ENCODE measurements at regions of chr20 and their contacts with region 1.

Region 1: GRCh38 chr20:63775096-63775978 is 35.8 kb downstream of the SLC2A4RG start:
- DNase-seq: peak; percentile 95
- H3K4me3 ChIP-seq: peak overlapping the region; percentile 28 to 47; a peak in 3 of 4 replicates
- H3K27ac ChIP-seq: no peak overlapping the region
- H3K4me1 ChIP-seq: peaks cover 0 to 5% of the 10 kb centered on the region in 2 experiments; a peak in 1 of 4 replicates
- H3K27me3 ChIP-seq: no peaks in the 10 kb centered on the region
- CTCF ChIP-seq: peak; percentile 77
- EP300 ChIP-seq: no peak
- RAD21 ChIP-seq: peak; percentile 72

Region 2: DNA sequence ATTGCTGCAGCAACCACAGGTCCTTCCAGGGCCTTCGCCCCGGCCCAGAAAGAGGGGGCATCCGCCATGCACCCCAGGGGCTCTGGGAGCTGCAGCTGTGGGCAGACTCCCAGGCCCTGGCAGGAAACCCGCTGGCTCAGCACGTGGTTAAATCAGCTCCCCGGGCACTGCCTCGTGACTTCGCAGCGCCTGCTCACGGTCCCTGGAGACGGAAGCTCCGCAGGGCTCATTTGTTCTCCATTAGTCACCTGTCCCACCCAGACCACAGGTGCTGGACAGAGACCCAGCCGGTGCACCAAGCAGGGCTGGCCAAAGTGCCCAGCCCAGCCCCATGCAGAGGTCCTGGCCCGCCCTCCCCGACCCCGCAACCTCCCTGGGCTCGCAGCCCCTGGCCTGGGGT is 317.6 kb before region 1 on chr20:
- CTCF ChIA-PET with region 1: no interaction called
- POLR2A ChIA-PET with region 1: no interaction called
- DNase-seq: peak; percentile 69
- H3K4me3 ChIP-seq: no peak overlapping the region
- H3K27ac ChIP-seq: peak overlapping the region in 1 of 2 experiments; percentile 99; a peak in 2 of 4 replicates
- H3K4me1 ChIP-seq: peaks cover 9 to 96% of the 10 kb centered on the region in 2 experiments; a peak in 2 of 4 replicates
- H3K27me3 ChIP-seq: no peaks in the 10 kb centered on the region; the same call in 1 of the 2 replicates
- CTCF ChIP-seq: no peak
- EP300 ChIP-seq: no peak
- RAD21 ChIP-seq: no peak

Region 3: DNA sequence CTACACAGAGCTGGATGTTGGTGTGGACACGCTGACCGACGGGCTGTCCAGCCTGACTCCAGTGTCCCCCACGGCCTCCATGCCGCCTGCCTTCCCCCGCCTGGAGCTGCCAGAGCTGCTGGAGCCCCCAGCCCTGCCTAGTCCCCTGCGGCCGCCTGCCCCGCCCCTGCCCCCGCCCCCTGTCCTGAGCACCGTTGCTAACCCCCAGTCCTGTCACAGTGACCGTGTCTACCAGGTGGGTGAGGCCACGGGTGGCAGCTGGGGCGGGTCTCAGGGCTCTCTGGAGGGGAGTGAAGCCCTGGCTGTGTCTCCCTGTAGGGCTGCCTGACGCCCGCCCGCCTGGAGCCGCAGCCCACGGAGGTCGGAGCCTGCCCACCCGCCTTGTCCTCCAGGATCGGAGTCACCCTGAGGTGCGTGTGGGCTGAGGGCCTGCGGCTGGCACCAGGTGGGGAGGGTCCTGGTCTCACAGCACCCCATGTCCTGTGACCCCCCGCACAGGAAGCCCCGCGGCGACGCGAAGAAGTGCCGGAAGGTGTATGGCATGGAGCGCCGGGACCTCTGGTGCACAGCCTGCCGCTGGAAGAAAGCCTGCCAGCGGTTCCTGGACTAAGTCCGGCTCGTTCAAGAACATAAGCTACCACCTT is 32.8 kb before region 1 on chr20:
- CTCF ChIA-PET with region 1: interaction called, 16 read pairs
- POLR2A ChIA-PET with region 1: no interaction called
- DNase-seq: no peak
- H3K4me3 ChIP-seq: no peak overlapping the region
- H3K27ac ChIP-seq: no peak overlapping the region
- H3K4me1 ChIP-seq: peaks cover 0 to 14% of the 10 kb centered on the region in 2 experiments; a peak in 1 of 4 replicates
- H3K27me3 ChIP-seq: no peaks in the 10 kb centered on the region
- CTCF ChIP-seq: no peak
- EP300 ChIP-seq: no peak
- RAD21 ChIP-seq: no peak

Region 4: GRCh38 chr20:63791497-63792156 is 16.3 kb after region 1 on chr20:
- CTCF ChIA-PET with region 1: interaction called, 103 read pairs
- POLR2A ChIA-PET with region 1: no interaction called
- DNase-seq: no peak
- H3K4me3 ChIP-seq: no peak overlapping the region
- H3K27ac ChIP-seq: no peak overlapping the region
- H3K4me1 ChIP-seq: no peaks in the 10 kb centered on the region
- H3K27me3 ChIP-seq: no peaks in the 10 kb centered on the region
- CTCF ChIP-seq: no peak
- EP300 ChIP-seq: no peak
- RAD21 ChIP-seq: no peak

Region 5: DNA sequence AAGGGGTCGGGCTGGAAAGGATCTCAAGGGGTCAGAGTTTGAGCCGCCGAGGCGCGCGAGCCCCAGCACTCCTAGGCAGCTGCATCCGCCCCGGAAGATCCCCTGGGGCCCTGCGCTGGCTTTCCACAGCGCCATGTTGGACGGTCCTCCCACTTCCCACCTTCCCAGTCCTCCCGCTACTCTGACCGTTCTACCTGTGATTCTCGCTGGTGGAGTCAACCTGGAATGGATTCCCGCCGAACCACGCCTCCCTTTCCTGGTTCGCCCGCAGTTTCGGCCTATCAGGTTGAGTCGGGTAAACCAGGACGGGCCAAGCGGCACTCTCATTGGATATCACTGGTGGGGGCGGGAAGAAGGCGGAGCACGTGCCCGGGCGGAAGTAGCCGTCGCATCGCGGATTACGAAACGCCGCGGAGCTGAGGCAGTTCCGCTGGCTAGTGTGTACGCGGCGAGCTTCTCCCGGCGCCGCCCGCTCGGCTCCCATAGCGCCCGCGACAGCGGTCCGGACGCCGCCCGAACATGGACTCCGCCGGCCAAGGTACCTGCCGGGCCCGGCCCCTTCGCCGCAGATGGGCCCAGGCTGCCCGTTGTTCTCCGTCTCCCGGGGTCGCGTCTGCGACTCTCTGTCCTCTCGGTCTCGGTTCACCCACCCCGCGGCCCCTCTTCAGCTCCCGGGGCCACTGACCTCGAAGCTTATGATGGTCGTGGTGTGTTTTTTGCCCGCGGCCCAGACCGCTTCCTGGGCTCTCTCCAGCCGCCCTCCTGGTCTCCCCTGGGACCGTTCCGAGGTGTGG is 89.7 kb after region 1 on chr20 and contains the start of gene TPD52L2:
- CTCF ChIA-PET with region 1: interaction called, 30 read pairs
- POLR2A ChIA-PET with region 1: interaction called, 3 read pairs
- DNase-seq: peak; percentile 98
- H3K4me3 ChIP-seq: peak within 1 kb of the TSS; percentile 78 to 97
- H3K27ac ChIP-seq: peak within 1 kb of the TSS; percentile 78 to 84
- H3K4me1 ChIP-seq: peaks cover 0 to 11% of the 10 kb centered on the region in 2 experiments; a peak in 1 of 4 replicates
- H3K27me3 ChIP-seq: no peaks in the 10 kb centered on the region
- CTCF ChIP-seq: no peak
- EP300 ChIP-seq: no peak
- RAD21 ChIP-seq: no peak
- polyA plus RNA-seq, gene TPD52L2: 137 and 161 TPM in 2 replicates

Region 6: GRCh38 chr20:63955827-63956663 is 180.7 kb after region 1 on chr20 and contains the start of gene UCKL1:
- CTCF ChIA-PET with region 1: interaction called, 13 read pairs
- POLR2A ChIA-PET with region 1: no interaction called
- DNase-seq: peak; percentile 95
- H3K4me3 ChIP-seq: peak within 1 kb of the TSS; percentile 91 to 98
- H3K27ac ChIP-seq: peak within 1 kb of the TSS; percentile 72 to 88
- H3K4me1 ChIP-seq: peaks cover 6 to 33% of the 10 kb centered on the region in 2 experiments; a peak in 1 of 4 replicates
- H3K27me3 ChIP-seq: no peaks in the 10 kb centered on the region
- CTCF ChIP-seq: no peak; the same call in 1 of the 2 replicates
- EP300 ChIP-seq: no peak
- RAD21 ChIP-seq: no peak
- polyA plus RNA-seq, gene UCKL1: 70.3 and 71.6 TPM in 2 replicates

Region 7: GRCh38 chr20:63980806-63981728 is 205.7 kb after region 1 on chr20 and contains the start of gene PRPF6:
- CTCF ChIA-PET with region 1: interaction called, 44 read pairs
- POLR2A ChIA-PET with region 1: no interaction called
- DNase-seq: peak; percentile 98
- H3K4me3 ChIP-seq: peak within 1 kb of the TSS; percentile 77 to 98
- H3K27ac ChIP-seq: peak within 1 kb of the TSS; percentile 89 to 90
- H3K4me1 ChIP-seq: peaks cover 12 to 24% of the 10 kb centered on the region in 2 experiments
- H3K27me3 ChIP-seq: no peaks in the 10 kb centered on the region
- CTCF ChIP-seq: peak; percentile 81
- EP300 ChIP-seq: 0 out of 4 replicates have a peak, but pooled peaks of 1 of the 2 experiments have one; percentile 8
- RAD21 ChIP-seq: no peak; the same call in 1 of the 2 replicates
- polyA plus RNA-seq, gene PRPF6: 50.1 and 59.1 TPM in 2 replicates

Measured in SK-N-SH (cell line).